CD8-positive, alpha-beta memory T cell (primary cell): ENCODE measurements at regions of chr12 and their contacts with region 1.

Region 1: GRCh38 chr12:8026291-8026900 is 6.1 kb upstream of the FOXJ2 start:
- DNase-seq: peak; percentile 92 to 98 (median 97)
- H3K4me3 ChIP-seq: peak overlapping the region; percentile 91
- H3K4me3 Mint-ChIP-seq: peak overlapping the region; percentile 89 to 98 (median 96)
- H3K27ac ChIP-seq: peak overlapping the region; percentile 99
- H3K27ac Mint-ChIP-seq: peak overlapping the region; percentile 97 to 100 (median 100)
- H3K4me1 ChIP-seq: peaks cover 16% of the 10 kb centered on the region
- H3K4me1 Mint-ChIP-seq: peaks cover 19 to 28% (median 20%) of the 10 kb centered on the region in 3 donors
- H3K27me3 ChIP-seq: no peaks in the 10 kb centered on the region
- H3K27me3 Mint-ChIP-seq: peaks cover 0 to 3% of the 10 kb centered on the region in 2 donors

Region 2: DNA sequence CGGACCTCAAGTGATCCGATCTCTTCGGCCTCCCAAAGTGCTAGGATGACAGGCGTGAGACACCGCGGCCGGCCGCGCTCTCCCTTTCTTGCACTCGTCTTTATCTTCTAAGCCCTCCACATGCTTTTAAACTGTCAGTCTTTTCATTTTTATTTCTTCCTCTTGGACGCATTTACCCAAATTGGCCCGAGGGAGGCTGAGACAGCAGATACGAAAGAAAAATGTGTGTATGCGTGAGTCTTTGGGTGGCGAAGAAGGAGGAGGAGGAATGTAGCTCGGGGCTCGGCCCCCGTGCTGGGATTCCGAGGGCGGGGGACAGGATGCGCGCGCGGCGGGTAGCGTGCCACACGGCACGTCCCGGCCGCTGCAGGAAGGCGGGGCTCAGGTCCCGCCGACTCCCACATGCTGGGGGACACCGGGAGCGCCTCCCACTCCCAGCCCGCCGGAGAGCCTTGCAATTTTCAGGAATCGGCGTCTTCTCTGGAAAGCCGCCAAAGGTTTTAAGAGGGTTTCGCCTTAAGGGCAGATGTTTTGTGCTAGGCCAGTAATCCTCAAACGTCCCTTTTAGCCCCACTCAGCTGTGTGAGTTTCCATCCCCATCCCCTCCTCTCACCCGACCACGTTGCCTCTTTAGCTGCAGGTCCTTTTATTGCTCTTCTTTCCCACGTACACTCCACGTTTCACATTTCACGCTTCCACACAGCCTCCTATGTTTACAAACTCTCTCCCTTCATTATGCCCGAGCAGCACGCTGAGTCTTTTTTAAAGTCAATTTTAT is 55.7 kb before region 1 on chr12:
- CTCF ChIA-PET with region 1: no interaction called
- POLR2A ChIA-PET with region 1: interaction called, 15 read pairs
- DNase-seq: peak; percentile 73 to 89 (median 82)
- H3K4me3 ChIP-seq: peak overlapping the region; percentile 78
- H3K4me3 Mint-ChIP-seq: peak overlapping the region; percentile 83 to 94 (median 85)
- H3K27ac ChIP-seq: peak overlapping the region; percentile 90
- H3K27ac Mint-ChIP-seq: peak overlapping the region; percentile 92 to 100 (median 96)
- H3K4me1 ChIP-seq: peaks cover 19% of the 10 kb centered on the region
- H3K4me1 Mint-ChIP-seq: peaks cover 18 to 33% (median 28%) of the 10 kb centered on the region in 3 donors
- H3K27me3 ChIP-seq: no peaks in the 10 kb centered on the region
- H3K27me3 Mint-ChIP-seq: peaks cover 0 to 5% of the 10 kb centered on the region in 2 donors

Region 3: DNA sequence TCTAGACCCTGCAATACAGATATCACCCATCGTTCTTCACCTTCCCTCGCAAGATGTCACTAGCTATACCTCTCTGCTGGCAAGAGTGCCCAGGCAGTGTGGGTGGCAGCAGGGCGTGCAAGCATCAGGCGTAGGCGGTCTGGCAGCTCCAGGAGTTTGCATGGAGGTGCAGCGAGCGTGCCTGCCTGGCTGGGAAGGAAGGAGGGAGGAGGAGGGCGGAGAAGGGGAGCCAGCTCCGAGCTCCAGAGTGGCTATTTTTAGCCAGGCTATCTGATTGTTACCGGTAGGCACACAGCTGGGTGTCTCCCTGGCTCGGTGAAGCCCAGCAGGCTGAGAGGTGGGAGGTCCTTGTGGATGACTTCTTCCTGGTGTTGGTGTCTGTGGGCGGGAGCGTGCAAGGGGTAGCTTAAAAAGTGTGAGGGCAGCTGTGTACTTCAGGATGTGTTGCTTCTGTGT is 12.3 kb after region 1 on chr12:
- CTCF ChIA-PET with region 1: interaction called, 3 read pairs
- POLR2A ChIA-PET with region 1: interaction called, 13 read pairs
- DNase-seq: peak in 1 of 5 donors; percentile 22
- H3K4me3 ChIP-seq: peak overlapping the region; percentile 32
- H3K4me3 Mint-ChIP-seq: peak overlapping the region; percentile 3 to 68 (median 63)
- H3K27ac ChIP-seq: no peak overlapping the region
- H3K27ac Mint-ChIP-seq: peak overlapping the region; percentile 66 to 86 (median 77)
- H3K4me1 ChIP-seq: peaks cover 58% of the 10 kb centered on the region
- H3K4me1 Mint-ChIP-seq: peaks cover 60 to 63% (median 60%) of the 10 kb centered on the region in 3 donors
- H3K27me3 ChIP-seq: no peaks in the 10 kb centered on the region
- H3K27me3 Mint-ChIP-seq: no peaks in the 10 kb centered on the region

Region 4: GRCh38 chr12:8057839-8058238 is 31.4 kb after region 1 on chr12:
- CTCF ChIA-PET with region 1: no interaction called
- POLR2A ChIA-PET with region 1: no interaction called
- DNase-seq: no peak
- H3K4me3 ChIP-seq: no peak overlapping the region
- H3K4me3 Mint-ChIP-seq: no peak overlapping the region
- H3K27ac ChIP-seq: no peak overlapping the region
- H3K27ac Mint-ChIP-seq: peak overlapping the region in 5 of 8 donors; percentile 9 to 73 (median 57)
- H3K4me1 ChIP-seq: no peaks in the 10 kb centered on the region
- H3K4me1 Mint-ChIP-seq: peaks cover 0 to 4% (median 0%) of the 10 kb centered on the region in 3 donors
- H3K27me3 ChIP-seq: no peaks in the 10 kb centered on the region
- H3K27me3 Mint-ChIP-seq: no peaks in the 10 kb centered on the region